PC-3 (cell line): ENCODE measurements at regions of chr4 and their contacts with region 1.

Region 1: DNA sequence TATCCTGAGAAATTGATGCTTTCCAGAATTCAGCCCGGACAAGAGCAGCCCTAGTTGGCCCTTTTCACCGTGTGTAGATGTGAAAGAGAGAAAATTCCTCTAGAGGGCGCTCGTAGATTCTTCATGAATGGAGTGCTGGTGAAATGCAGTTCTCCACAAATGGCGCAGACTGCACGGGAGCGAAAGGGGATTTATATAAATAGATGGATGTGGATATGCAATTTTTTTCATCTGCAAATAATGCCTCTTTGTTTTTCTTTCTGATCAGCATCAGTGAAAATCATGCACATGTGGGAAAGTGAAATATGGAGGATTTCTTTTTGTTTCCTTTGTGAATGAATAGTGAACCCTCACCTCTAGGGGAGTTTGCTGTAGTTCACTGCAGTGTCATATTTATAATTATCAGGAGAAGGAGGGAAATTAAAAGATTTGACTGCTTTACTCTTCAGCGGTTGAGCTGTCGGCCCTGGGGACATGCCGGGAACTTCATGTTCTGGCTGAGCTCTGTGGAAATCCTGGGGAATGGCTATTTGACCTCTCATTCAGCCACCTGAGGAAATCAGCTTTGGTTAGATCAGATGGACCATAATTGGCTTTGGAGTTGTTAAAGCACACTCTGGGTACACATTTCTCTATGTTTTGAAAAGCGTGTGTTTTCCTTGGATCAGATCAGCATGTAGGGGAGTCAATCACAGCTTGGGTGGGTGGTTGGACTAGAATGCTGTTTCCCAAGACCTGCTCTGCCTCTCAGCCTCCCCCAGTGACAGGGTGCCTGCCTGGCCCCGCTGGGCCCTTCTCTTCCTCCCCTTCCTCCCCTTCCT is 115.0 kb upstream of the SHISA3 start:
- DNase-seq: peak; percentile 89
- ATAC-seq: peak; percentile 85
- H3K4me3 ChIP-seq: peak overlapping the region; percentile 14; the same call in 1 of the 2 replicates
- H3K27ac ChIP-seq: no peak overlapping the region
- H3K4me1 ChIP-seq: peaks cover 20% of the 10 kb centered on the region
- H3K27me3 ChIP-seq: no peaks in the 10 kb centered on the region
- CTCF ChIP-seq: peak; percentile 84

Region 2: GRCh38 chr4:42302348-42302747 is 20.1 kb after region 1 on chr4:
- CTCF ChIA-PET with region 1: no interaction called
- POLR2A ChIA-PET with region 1: no interaction called
- intact Hi-C with region 1: loop called (anchors 1 kb)
- DNase-seq: peak; percentile 64
- ATAC-seq: peak; percentile 60; the same call in 1 of the 2 replicates
- H3K4me3 ChIP-seq: no peak overlapping the region
- H3K27ac ChIP-seq: no peak overlapping the region
- H3K4me1 ChIP-seq: no peaks in the 10 kb centered on the region
- H3K27me3 ChIP-seq: no peaks in the 10 kb centered on the region
- CTCF ChIP-seq: peak; percentile 50

Region 3: DNA sequence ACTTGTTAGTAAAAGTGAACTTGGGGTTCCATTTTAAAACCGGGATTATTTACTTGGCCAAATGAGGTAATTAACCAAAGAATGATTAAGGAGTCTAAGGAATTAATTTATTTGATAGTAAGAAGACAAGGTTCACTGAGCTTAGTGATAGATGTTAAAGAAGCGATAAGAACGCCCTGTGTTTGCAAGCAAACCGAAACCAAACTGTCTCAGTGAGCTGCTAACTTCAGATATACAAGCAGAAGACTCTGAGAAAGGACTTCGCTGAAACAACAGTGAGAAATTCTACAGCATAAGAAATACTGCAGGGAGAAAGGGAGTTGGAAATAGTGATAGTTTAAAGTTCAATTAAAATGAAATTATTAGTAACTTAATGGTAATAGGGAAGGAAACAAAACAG is 77.4 kb after region 1 on chr4:
- CTCF ChIA-PET with region 1: no interaction called
- POLR2A ChIA-PET with region 1: no interaction called
- intact Hi-C with region 1: loop called (anchors 5 kb)
- DNase-seq: no peak
- ATAC-seq: no peak
- H3K4me3 ChIP-seq: peak overlapping the region; percentile 62
- H3K27ac ChIP-seq: no peak overlapping the region
- H3K4me1 ChIP-seq: no peaks in the 10 kb centered on the region
- H3K27me3 ChIP-seq: no peaks in the 10 kb centered on the region
- CTCF ChIP-seq: no peak

Region 4: GRCh38 chr4:42371306-42372252 is 89.3 kb after region 1 on chr4:
- CTCF ChIA-PET with region 1: interaction called, 4 read pairs
- POLR2A ChIA-PET with region 1: no interaction called
- intact Hi-C with region 1: loop called (anchors 1 kb)
- DNase-seq: peak; percentile 77
- ATAC-seq: peak; percentile 80
- H3K4me3 ChIP-seq: no peak overlapping the region
- H3K27ac ChIP-seq: no peak overlapping the region
- H3K4me1 ChIP-seq: no peaks in the 10 kb centered on the region
- H3K27me3 ChIP-seq: no peaks in the 10 kb centered on the region
- CTCF ChIP-seq: peak; percentile 68

Region 5: DNA sequence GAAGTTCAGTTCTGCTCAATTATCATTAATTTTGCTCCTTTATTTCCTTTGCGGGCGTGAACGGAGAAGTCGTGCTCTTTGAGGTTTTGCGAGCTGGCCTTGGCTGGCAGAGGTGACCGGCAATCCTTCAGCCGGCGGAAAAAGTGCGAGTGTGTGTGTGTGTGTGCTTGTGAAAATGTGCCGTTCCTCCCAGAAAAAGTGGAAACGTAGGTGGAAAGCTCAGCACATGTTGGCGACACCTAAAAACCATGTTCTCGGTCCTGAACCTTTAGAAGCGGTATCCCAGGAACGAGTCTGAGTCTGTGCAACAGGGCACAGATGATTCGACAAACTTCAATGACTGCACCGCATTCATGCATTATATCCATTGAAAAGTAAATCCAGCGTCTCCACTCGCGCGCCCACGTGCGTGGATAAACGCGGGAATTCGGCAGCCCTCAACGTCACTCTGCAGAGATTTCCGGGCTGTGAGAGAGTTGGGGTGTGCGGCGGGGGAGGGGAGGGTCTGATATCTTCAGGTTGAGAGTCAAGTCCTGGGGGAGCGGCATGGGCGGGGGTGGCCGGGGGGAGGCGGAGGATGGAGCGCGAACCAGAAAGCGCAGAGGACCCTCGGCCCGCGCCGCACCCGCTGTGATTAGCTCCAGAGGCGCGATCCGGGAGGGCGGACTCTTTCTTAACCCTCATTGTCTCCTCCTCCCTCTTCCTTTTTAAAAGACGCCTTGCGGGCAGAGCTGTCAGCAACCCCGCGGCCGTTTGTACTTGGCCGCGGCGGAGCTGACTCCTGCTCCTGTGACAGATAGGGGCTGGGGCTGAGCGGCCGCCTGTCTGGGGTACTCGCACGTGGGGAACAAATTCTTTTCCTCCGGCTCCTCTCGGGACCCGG is 114.7 kb after region 1 on chr4 and contains the start of gene SHISA3:
- CTCF ChIA-PET with region 1: no interaction called
- POLR2A ChIA-PET with region 1: no interaction called
- intact Hi-C with region 1: loop called (anchors 2 kb)
- DNase-seq: peak; percentile 53
- ATAC-seq: peak; percentile 68
- H3K4me3 ChIP-seq: peak within 1 kb of the TSS; percentile 90
- H3K27ac ChIP-seq: no peak within 1 kb of the TSS
- H3K4me1 ChIP-seq: peaks cover 11% of the 10 kb centered on the region; the same call in 1 of the 2 replicates
- H3K27me3 ChIP-seq: no peaks in the 10 kb centered on the region
- CTCF ChIP-seq: no peak
- total RNA-seq, gene SHISA3: 29.5 and 33.5 TPM in 2 replicates

Region 6: GRCh38 chr4:42816189-42816879 is 534.0 kb after region 1 on chr4:
- CTCF ChIA-PET with region 1: no interaction called
- POLR2A ChIA-PET with region 1: no interaction called
- intact Hi-C with region 1: no loop called
- DNase-seq: no peak
- ATAC-seq: no peak
- H3K4me3 ChIP-seq: no peak overlapping the region
- H3K27ac ChIP-seq: no peak overlapping the region
- H3K4me1 ChIP-seq: no peaks in the 10 kb centered on the region
- H3K27me3 ChIP-seq: 0 out of 2 replicates have a peak, but pooled peaks cover 7% of the 10 kb centered on the region
- CTCF ChIP-seq: no peak